Activated CD4-positive, alpha-beta T cell treated with anti-CD3 and anti-CD28 coated beads, Interleukin-2, amount 10 ng/mL, durations not matched to agents 24 days and 14 days (primary cell): ENCODE measurements at regions of chr10 and their contacts with region 1.

Region 1: GRCh38 chr10:93288654-93289634 is 193.2 kb downstream of the MYOF start:
- DNase-seq: peak; percentile 84
- H3K4me3 Mint-ChIP-seq: no peak overlapping the region
- H3K27ac Mint-ChIP-seq: no peak overlapping the region
- H3K4me1 Mint-ChIP-seq: no peaks in the 10 kb centered on the region
- H3K27me3 Mint-ChIP-seq: peaks cover 1% of the 10 kb centered on the region

Region 2: GRCh38 chr10:93080350-93081046 is 208.4 kb before region 1 on chr10:
- intact Hi-C with region 1: loop called (anchors 5 kb)
- DNase-seq: peak; percentile 83
- H3K4me3 Mint-ChIP-seq: no peak overlapping the region
- H3K27ac Mint-ChIP-seq: no peak overlapping the region
- H3K4me1 Mint-ChIP-seq: peaks cover 7% of the 10 kb centered on the region
- H3K27me3 Mint-ChIP-seq: peaks cover 41% of the 10 kb centered on the region

Region 3: GRCh38 chr10:93115661-93116383 is 173.1 kb before region 1 on chr10:
- intact Hi-C with region 1: loop called (anchors 2 kb)
- DNase-seq: peak; percentile 88
- H3K4me3 Mint-ChIP-seq: no peak overlapping the region
- H3K27ac Mint-ChIP-seq: no peak overlapping the region
- H3K4me1 Mint-ChIP-seq: peaks cover 2% of the 10 kb centered on the region
- H3K27me3 Mint-ChIP-seq: peaks cover 18% of the 10 kb centered on the region